Activated CD4-positive, alpha-beta memory T cell treated with anti-CD3 and anti-CD28 coated beads for 36 hours (primary cell): ENCODE measurements at regions of chr2 and their contacts with region 1.

Region 1: DNA sequence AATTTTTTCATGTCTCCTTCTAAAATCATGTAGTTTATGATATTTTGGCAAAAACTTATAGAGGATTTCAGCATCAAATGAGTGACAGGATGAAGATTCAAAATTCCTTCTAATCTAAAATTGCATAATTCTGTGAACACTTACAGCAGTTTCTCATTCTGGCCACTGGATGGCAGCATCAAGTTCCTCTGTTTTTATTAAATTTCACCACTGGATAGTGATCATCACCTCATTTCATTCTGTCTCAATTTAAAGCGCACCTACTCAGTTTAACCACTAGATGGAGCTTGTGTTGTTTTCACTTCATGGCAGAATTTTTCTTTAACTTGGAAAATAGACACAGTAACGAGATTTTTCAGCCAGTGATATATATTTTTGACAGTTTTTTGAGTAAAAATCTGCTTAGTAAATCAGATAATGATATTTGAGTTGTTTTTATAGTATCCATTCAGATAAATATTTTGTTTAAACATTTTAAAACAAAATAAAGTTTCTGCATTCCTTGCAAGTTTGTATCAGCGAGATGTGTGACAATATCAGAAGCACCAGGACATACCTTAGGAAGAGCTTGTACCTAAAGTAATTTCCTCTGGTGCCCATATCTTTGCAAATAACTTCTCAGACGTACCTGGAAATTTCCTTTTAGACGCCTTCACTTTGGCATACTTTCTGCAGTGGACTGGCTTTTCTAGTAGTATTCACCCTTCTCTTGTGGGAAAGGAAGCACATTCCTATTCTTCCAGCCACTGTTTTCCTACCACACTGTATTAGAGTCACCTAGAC is 94.7 kb upstream of the ARHGAP15 start:
- DNase-seq: peak; percentile 64
- H3K4me3 Mint-ChIP-seq: no peak overlapping the region
- H3K27ac Mint-ChIP-seq: no peak overlapping the region
- H3K4me1 Mint-ChIP-seq: peaks cover 8% of the 10 kb centered on the region
- H3K27me3 Mint-ChIP-seq: no peaks in the 10 kb centered on the region

Region 2: GRCh38 chr2:142693171-142693950 is 341.1 kb before region 1 on chr2:
- CTCF ChIA-PET with region 1: no interaction called
- POLR2A ChIA-PET with region 1: no interaction called
- intact Hi-C with region 1: no loop called
- DNase-seq: no peak
- H3K4me3 Mint-ChIP-seq: no peak overlapping the region
- H3K27ac Mint-ChIP-seq: no peak overlapping the region
- H3K4me1 Mint-ChIP-seq: no peaks in the 10 kb centered on the region
- H3K27me3 Mint-ChIP-seq: no peaks in the 10 kb centered on the region

Region 3: GRCh38 chr2:143083636-143084035 is 49.2 kb after region 1 on chr2:
- CTCF ChIA-PET with region 1: interaction called, 10 read pairs
- POLR2A ChIA-PET with region 1: no interaction called
- intact Hi-C with region 1: loop called (anchors 1 kb)
- DNase-seq: no peak
- H3K4me3 Mint-ChIP-seq: no peak overlapping the region
- H3K27ac Mint-ChIP-seq: peak overlapping the region; percentile 11
- H3K4me1 Mint-ChIP-seq: peaks cover 29% of the 10 kb centered on the region
- H3K27me3 Mint-ChIP-seq: no peaks in the 10 kb centered on the region

Region 4: GRCh38 chr2:143177096-143177786 is 142.8 kb after region 1 on chr2:
- CTCF ChIA-PET with region 1: interaction called, 4 read pairs
- POLR2A ChIA-PET with region 1: no interaction called
- intact Hi-C with region 1: loop called (anchors 5 kb)
- DNase-seq: no peak
- H3K4me3 Mint-ChIP-seq: peak overlapping the region; percentile 70
- H3K27ac Mint-ChIP-seq: peak overlapping the region; percentile 82
- H3K4me1 Mint-ChIP-seq: peaks cover 53% of the 10 kb centered on the region
- H3K27me3 Mint-ChIP-seq: no peaks in the 10 kb centered on the region

Region 5: GRCh38 chr2:143217512-143218115 is 183.1 kb after region 1 on chr2:
- CTCF ChIA-PET with region 1: interaction called, 16 read pairs
- POLR2A ChIA-PET with region 1: no interaction called
- intact Hi-C with region 1: loop called (anchors 1 kb)
- DNase-seq: no peak
- H3K4me3 Mint-ChIP-seq: no peak overlapping the region
- H3K27ac Mint-ChIP-seq: peak overlapping the region; percentile 38
- H3K4me1 Mint-ChIP-seq: peaks cover 38% of the 10 kb centered on the region
- H3K27me3 Mint-ChIP-seq: no peaks in the 10 kb centered on the region

Region 6: DNA sequence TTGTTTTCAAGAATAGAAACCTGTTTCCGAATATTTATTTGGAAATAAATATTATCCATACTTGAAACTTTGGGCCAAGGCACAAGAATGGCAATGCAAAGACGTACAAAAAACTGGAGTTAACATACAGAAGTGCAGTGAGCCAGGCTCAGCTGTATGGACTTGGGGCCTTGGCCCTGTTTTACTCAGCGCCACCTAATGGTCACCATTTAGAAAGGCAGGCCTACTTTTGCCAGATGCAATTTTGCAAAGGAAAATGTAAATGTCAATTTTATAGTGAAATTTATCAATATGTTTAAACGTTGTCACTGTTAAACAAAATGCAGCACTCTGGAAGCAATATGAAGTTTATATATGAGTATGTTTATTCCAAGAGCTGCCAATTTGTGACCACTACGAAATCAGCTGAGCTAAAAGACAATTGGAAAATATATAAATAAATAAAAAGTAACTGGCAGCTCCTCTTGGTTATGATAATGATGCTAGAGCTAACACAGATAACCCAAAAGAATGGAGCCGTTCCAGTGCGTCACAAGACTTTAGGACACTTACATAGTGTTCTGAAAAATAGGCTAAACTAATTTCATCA is 249.7 kb after region 1 on chr2:
- CTCF ChIA-PET with region 1: interaction called, 6 read pairs
- POLR2A ChIA-PET with region 1: no interaction called
- intact Hi-C with region 1: loop called (anchors 1 kb)
- DNase-seq: peak; percentile 38
- H3K4me3 Mint-ChIP-seq: no peak overlapping the region
- H3K27ac Mint-ChIP-seq: peak overlapping the region; percentile 3
- H3K4me1 Mint-ChIP-seq: peaks cover 55% of the 10 kb centered on the region
- H3K27me3 Mint-ChIP-seq: no peaks in the 10 kb centered on the region

Region 7: GRCh38 chr2:143397884-143398614 is 363.6 kb after region 1 on chr2:
- CTCF ChIA-PET with region 1: no interaction called
- POLR2A ChIA-PET with region 1: no interaction called
- intact Hi-C with region 1: loop called (anchors 10 kb)
- DNase-seq: no peak
- H3K4me3 Mint-ChIP-seq: peak overlapping the region; percentile 24
- H3K27ac Mint-ChIP-seq: peak overlapping the region; percentile 43
- H3K4me1 Mint-ChIP-seq: peaks cover 66% of the 10 kb centered on the region
- H3K27me3 Mint-ChIP-seq: no peaks in the 10 kb centered on the region